Sciatic nerve (tissue), 2 donors: ENCODE measurements at regions of chr1 and their contacts with region 1.

Region 1: GRCh38 chr1:229363723-229364122 is 20.9 kb upstream of the CCSAP start:
- DNase-seq: no peak
- ATAC-seq: no peak

Region 2: DNA sequence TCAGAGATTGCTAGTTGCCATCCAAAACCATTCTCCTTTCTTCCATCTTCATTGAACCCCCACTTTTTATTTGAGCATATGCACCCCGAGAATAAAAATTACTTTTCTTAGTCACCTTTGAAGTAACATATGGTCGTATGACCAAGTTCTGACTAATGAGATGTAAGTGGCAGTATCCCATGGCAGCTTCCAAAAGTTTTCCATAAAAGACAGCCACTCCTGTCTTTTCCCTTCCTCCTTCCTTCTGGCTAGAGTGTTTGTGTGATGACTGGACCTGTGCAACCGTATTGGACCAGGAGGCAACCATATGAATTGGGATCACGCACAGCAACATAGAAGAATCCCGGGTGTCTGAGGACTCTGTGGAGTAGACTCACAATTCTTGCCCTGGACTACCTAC is 20.2 kb after region 1 on chr1:
- intact Hi-C with region 1: loop called (anchors 1 kb)
- DNase-seq: no peak
- ATAC-seq: no peak

Region 3: GRCh38 chr1:229430761-229431283 is 67.1 kb after region 1 on chr1:
- intact Hi-C with region 1: no loop called
- DNase-seq: peak; percentile 80
- ATAC-seq: peak; percentile 74

Region 4: GRCh38 chr1:229625071-229625914 is 261.6 kb after region 1 on chr1:
- intact Hi-C with region 1: no loop called
- DNase-seq: peak; percentile 72
- ATAC-seq: peak; percentile 60